CD4-positive, alpha-beta T cell (primary cell): ENCODE measurements at regions of chr12 and their contacts with region 1.

Region 1: GRCh38 chr12:389139-390096 is at the start of gene KDM5A:
- DNase-seq: peak; percentile 81 to 96 (median 88)
- ATAC-seq: peak; percentile 90
- H3K4me3 ChIP-seq: peak within 1 kb of the TSS; percentile 91
- H3K4me3 Mint-ChIP-seq: peak within 1 kb of the TSS; percentile 99
- H3K27ac ChIP-seq: peak within 1 kb of the TSS; percentile 90 to 93
- H3K27ac Mint-ChIP-seq: peak within 1 kb of the TSS; percentile 93
- H3K4me1 ChIP-seq: peaks cover 10% of the 10 kb centered on the region
- H3K4me1 Mint-ChIP-seq: peaks cover 48% of the 10 kb centered on the region
- H3K27me3 ChIP-seq: no peaks in the 10 kb centered on the region
- H3K27me3 Mint-ChIP-seq: no peaks in the 10 kb centered on the region
- CTCF ChIP-seq: no peak
- total RNA-seq, gene KDM5A: 149 to 151 TPM

Region 2: DNA sequence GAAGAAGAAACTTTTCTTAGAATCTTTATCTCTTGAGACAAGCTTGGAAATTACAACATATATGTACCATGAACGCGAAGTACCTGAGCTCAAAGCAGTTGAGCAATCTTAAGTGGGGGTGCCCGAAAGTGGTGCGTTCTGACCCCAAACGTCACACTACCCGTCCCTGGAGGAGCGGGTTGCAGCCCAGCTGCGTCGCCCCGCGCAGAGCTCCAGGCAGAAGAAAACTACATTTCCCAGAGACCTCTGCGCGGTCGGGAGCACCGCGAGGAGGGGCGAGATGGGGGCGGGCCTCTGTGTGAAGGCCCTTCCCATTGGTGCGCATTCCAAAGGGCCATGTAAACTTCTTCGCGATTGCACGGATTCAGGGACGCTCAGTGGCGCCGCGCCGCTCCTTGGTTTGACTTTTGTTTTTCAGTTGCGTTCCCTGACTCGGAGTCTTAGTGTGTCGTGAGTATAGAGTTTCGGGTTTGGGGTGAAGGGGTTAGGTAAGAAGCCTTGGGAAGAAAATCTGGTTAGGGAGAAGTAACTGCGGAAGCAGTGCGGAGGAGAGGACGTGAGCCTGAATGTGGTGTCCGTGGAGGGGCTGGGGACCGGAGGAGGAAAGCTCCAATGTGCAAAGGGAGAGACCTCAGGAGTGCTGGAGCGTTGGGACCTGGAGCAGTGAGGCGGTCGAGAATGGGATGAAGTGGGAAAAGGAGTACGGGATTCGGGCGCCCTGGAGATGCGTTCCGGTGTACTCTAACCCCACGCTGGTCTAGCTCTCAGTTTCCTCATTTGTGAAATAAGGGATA is 12.0 kb after region 1 on chr12 and contains the start of gene CCDC77:
- CTCF ChIA-PET with region 1: interaction called, 25 read pairs
- POLR2A ChIA-PET with region 1: interaction called, 90 read pairs
- intact Hi-C with region 1: loop called (anchors 1 kb)
- DNase-seq: peak; percentile 85 to 96 (median 92)
- ATAC-seq: peak; percentile 100
- H3K4me3 ChIP-seq: peak within 1 kb of the TSS; percentile 75
- H3K4me3 Mint-ChIP-seq: no peak within 1 kb of the TSS
- H3K27ac ChIP-seq: peak within 1 kb of the TSS in 1 of 2 donors; percentile 29
- H3K27ac Mint-ChIP-seq: no peak within 1 kb of the TSS
- H3K4me1 ChIP-seq: peaks cover 12% of the 10 kb centered on the region
- H3K4me1 Mint-ChIP-seq: no peaks in the 10 kb centered on the region
- H3K27me3 ChIP-seq: no peaks in the 10 kb centered on the region
- H3K27me3 Mint-ChIP-seq: no peaks in the 10 kb centered on the region
- CTCF ChIP-seq: peak; percentile 22
- total RNA-seq, gene CCDC77: 5.3 to 7.8 TPM